ENCODE measurements at regions of chr12 and their contacts with region 1.

Region 1: DNA sequence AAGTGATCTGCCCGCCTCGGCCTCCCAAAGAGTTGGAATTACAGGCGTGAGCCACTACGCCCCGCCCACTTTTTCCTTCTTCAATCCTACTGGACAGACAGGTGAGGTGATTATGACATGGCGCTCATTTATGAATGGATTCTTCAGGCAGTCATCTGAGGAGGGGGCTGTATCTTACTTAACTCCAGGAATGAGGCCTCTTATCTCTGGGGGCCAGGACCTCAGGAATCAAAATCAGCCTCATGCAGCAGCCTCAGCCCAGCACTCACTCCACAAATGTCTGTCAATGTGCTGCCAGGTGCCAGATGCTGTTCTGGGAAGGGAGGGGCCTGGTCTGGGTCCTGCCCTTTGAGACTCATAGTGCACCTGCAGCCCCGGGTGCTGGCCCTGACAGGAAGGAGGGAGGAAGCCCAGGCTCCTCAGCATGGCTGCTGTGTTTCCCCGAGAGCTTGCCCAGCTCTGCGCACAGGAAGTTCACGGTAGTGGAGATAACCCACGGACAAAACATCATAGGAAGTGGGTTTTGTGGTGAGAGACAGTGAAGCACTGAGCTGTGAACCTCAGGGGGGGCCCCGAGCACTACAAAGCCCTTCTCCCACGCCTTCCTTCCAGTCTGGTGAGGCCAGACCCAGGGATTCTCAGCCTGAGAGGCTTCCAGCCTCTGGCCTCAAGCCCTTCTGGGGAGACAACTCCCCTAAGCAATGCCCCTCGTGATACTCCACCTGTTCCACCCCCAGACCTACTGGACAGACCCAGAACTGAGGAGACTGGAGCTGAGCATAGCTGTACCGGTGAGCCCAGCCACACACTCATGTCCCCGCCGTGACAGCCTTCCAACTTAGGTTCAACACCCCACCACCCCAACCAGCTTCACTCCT is 22.3 kb downstream of the GALNT6 start:
- DNase-seq: peak; percentile 77 to 97
- ATAC-seq: peak; percentile 91 to 95 (median 91)
- H3K4me3 ChIP-seq: no peak overlapping the region
- H3K4me3 Mint-ChIP-seq: peak overlapping the region; percentile 80
- H3K27ac ChIP-seq: peak overlapping the region; percentile 72
- H3K27ac Mint-ChIP-seq: peak overlapping the region; percentile 82 to 87
- H3K4me1 ChIP-seq: peaks cover 30% of the 10 kb centered on the region
- H3K4me1 Mint-ChIP-seq: peaks cover 31 to 33% of the 10 kb centered on the region in 2 donors
- H3K27me3 ChIP-seq: no peaks in the 10 kb centered on the region
- H3K27me3 Mint-ChIP-seq: no peaks in the 10 kb centered on the region
- CTCF ChIP-seq: no peak

Region 2: DNA sequence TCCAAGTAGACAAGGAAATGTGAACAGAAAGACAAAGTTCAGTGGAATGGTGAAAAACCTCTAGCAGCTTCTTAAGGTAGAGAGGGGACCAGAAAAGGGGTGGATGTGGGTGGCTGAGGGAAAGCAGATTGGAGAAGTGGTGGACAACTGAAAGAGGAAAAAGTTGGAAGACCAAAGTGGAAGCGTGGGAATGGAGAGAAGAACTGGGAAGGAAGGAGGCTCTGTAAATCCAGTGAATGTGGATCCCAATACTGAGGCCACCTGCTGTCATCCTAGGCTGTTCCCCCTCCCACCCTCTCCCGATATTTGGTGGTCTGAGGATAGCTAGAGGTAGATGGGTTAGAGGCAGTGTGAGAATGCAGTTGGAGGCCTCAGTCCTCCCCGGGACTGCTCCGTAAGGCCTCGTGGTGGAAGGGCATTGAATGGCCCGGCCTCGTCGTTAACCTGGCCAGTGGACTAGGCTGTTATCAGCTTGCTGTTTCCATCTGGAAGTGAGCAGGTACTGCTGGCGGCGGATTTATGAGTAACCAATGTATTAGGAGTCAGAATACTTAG is 150.2 kb before region 1 on chr12:
- intact Hi-C with region 1: no loop called
- DNase-seq: no peak
- ATAC-seq: no peak
- H3K4me3 ChIP-seq: peak overlapping the region; percentile 92
- H3K4me3 Mint-ChIP-seq: peak overlapping the region; percentile 91
- H3K27ac ChIP-seq: peak overlapping the region; percentile 88
- H3K27ac Mint-ChIP-seq: peak overlapping the region; percentile 84 to 89
- H3K4me1 ChIP-seq: peaks cover 15% of the 10 kb centered on the region
- H3K4me1 Mint-ChIP-seq: peaks cover 6 to 7% of the 10 kb centered on the region in 2 donors
- H3K27me3 ChIP-seq: no peaks in the 10 kb centered on the region
- H3K27me3 Mint-ChIP-seq: peaks cover 0 to 3% of the 10 kb centered on the region in 2 donors
- CTCF ChIP-seq: no peak

Region 3: GRCh38 chr12:51326762-51327439 is 42.0 kb before region 1 on chr12:
- intact Hi-C with region 1: loop called (anchors 1 kb)
- DNase-seq: peak in 1 of 2 donors; percentile 42
- ATAC-seq: peak; percentile 19 to 47 (median 23)
- H3K4me3 ChIP-seq: no peak overlapping the region
- H3K4me3 Mint-ChIP-seq: peak overlapping the region; percentile 59
- H3K27ac ChIP-seq: peak overlapping the region; percentile 57
- H3K27ac Mint-ChIP-seq: peak overlapping the region; percentile 87 to 90
- H3K4me1 ChIP-seq: peaks cover 64% of the 10 kb centered on the region
- H3K4me1 Mint-ChIP-seq: peaks cover 67% of the 10 kb centered on the region in 2 donors
- H3K27me3 ChIP-seq: no peaks in the 10 kb centered on the region
- H3K27me3 Mint-ChIP-seq: no peaks in the 10 kb centered on the region
- CTCF ChIP-seq: no peak

Region 4: GRCh38 chr12:51351913-51352532 is 16.9 kb before region 1 on chr12:
- intact Hi-C with region 1: no loop called
- DNase-seq: peak; percentile 35 to 79
- ATAC-seq: peak; percentile 64 to 89 (median 74)
- H3K4me3 ChIP-seq: no peak overlapping the region
- H3K4me3 Mint-ChIP-seq: no peak overlapping the region
- H3K27ac ChIP-seq: no peak overlapping the region
- H3K27ac Mint-ChIP-seq: peak overlapping the region in 1 of 2 donors; percentile 51
- H3K4me1 ChIP-seq: no peaks in the 10 kb centered on the region
- H3K4me1 Mint-ChIP-seq: peaks cover 0 to 8% of the 10 kb centered on the region in 2 donors
- H3K27me3 ChIP-seq: no peaks in the 10 kb centered on the region
- H3K27me3 Mint-ChIP-seq: no peaks in the 10 kb centered on the region
- CTCF ChIP-seq: peak; percentile 77

Region 5: GRCh38 chr12:51391283-51392162 is 22.6 kb after region 1 on chr12 and contains the start of gene GALNT6:
- intact Hi-C with region 1: loop called (anchors 1 kb)
- DNase-seq: peak; percentile 51 to 85
- ATAC-seq: peak; percentile 52 to 68 (median 65)
- H3K4me3 ChIP-seq: peak within 1 kb of the TSS; percentile 63
- H3K4me3 Mint-ChIP-seq: peak within 1 kb of the TSS; percentile 94
- H3K27ac ChIP-seq: peak within 1 kb of the TSS; percentile 78
- H3K27ac Mint-ChIP-seq: peak within 1 kb of the TSS; percentile 89 to 94
- H3K4me1 ChIP-seq: peaks cover 68% of the 10 kb centered on the region
- H3K4me1 Mint-ChIP-seq: peaks cover 83 to 91% of the 10 kb centered on the region in 2 donors
- H3K27me3 ChIP-seq: no peaks in the 10 kb centered on the region
- H3K27me3 Mint-ChIP-seq: no peaks in the 10 kb centered on the region
- CTCF ChIP-seq: no peak
- total RNA-seq, gene GALNT6: 19.3 to 38.5 (median 33.9) TPM